ENCODE measurements at regions of chr3 and their contacts with region 1.

Region 1: DNA sequence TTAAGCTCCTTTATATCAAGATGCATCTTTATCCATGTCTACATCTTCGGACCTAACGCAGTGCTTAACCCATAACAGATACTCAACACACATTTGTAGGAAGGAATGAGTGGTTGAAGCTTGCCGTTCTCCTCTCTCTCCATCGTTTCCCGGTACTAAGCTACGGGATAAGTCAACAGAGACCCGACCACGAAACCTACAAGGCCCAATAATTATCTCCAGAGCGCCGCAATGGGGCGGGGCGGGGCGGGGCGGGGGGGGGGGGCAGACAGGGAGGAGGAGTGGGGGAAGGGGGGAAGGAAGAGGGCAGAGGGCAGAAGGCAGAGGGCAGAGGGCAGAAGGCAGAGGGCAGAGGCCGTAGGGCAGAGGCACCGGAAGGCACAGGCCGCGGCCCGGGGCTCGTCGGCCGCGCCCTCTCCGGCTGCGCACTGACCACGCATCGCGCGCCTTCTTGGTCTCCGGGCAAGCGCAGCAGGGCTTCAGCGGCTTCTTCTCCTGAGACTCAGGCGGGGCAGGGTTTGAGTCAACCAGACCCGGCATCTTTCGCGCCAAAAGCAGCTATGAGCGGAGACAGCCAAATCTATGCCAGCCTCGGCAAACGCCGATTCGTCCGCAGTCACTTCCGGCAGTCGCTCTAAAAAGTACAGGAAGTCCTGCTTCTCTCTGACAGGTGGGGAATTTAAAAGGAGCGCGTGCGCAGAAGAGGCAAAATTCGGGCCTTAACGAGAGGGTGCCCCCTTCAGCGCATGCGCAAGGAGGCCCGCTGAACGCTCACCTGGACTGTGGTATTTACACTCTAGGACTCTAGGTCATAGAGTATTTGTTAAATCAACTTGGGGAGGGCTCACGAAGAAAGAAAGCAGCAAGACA is at the start of gene COX17:
- DNase-seq: peak; percentile 99
- ATAC-seq: peak; percentile 78
- H3K4me3 ChIP-seq: peak within 1 kb of the TSS; percentile 84
- H3K27ac ChIP-seq: peak within 1 kb of the TSS; percentile 71
- H3K4me1 ChIP-seq: peaks cover 18% of the 10 kb centered on the region
- H3K27me3 ChIP-seq: no peaks in the 10 kb centered on the region
- CTCF ChIP-seq: no peak
- total RNA-seq, gene COX17: 102 and 159 TPM in 2 replicates

Region 2: GRCh38 chr3:119145500-119146191 is 531.4 kb before region 1 on chr3 and contains the start of gene TEX55:
- CTCF ChIA-PET with region 1: no interaction called
- POLR2A ChIA-PET with region 1: no interaction called
- intact Hi-C with region 1: loop called (anchors 5 kb)
- DNase-seq: peak; percentile 87
- ATAC-seq: peak; percentile 75
- H3K4me3 ChIP-seq: no peak within 1 kb of the TSS
- H3K27ac ChIP-seq: peak within 1 kb of the TSS; percentile 2; the same call in 1 of the 2 replicates
- H3K4me1 ChIP-seq: peaks cover 25% of the 10 kb centered on the region
- H3K27me3 ChIP-seq: no peaks in the 10 kb centered on the region
- CTCF ChIP-seq: peak; percentile 94
- total RNA-seq, gene TEX55: 0.33 TPM in 1 of 2 replicates, not detected in the other

Region 3: DNA sequence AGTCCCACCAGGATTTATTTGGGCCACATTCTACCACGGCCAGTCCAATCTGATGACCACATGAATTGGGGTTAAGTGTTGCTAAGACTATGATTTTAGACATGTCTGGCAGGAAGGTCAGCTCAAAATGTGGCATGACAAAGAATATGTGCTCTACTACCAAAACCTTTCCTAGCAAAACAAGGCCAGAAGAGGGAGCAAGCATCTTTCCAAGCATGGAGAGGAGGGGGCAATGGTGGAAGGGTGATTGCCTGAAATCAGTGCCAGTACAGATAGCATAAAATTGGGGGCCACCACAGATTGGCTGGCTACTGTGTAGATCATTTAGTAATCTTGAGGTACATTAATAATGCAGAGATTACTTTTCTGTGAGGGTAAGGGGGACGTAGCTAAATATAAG is 256.8 kb before region 1 on chr3:
- CTCF ChIA-PET with region 1: no interaction called
- POLR2A ChIA-PET with region 1: no interaction called
- intact Hi-C with region 1: loop called (anchors 5 kb)
- DNase-seq: peak; percentile 41
- ATAC-seq: peak; percentile 44; the same call in 1 of the 2 replicates
- H3K4me3 ChIP-seq: no peak overlapping the region
- H3K27ac ChIP-seq: no peak overlapping the region
- H3K4me1 ChIP-seq: no peaks in the 10 kb centered on the region
- H3K27me3 ChIP-seq: no peaks in the 10 kb centered on the region
- CTCF ChIP-seq: peak; percentile 57

Region 4: GRCh38 chr3:119498186-119498987 is 178.6 kb before region 1 on chr3 and contains the start of gene TIMMDC1:
- CTCF ChIA-PET with region 1: no interaction called
- POLR2A ChIA-PET with region 1: interaction called, 3 read pairs
- intact Hi-C with region 1: loop called (anchors 1 kb)
- DNase-seq: peak; percentile 99
- ATAC-seq: peak; percentile 95
- H3K4me3 ChIP-seq: peak within 1 kb of the TSS; percentile 97
- H3K27ac ChIP-seq: peak within 1 kb of the TSS; percentile 74
- H3K4me1 ChIP-seq: peaks cover 29% of the 10 kb centered on the region
- H3K27me3 ChIP-seq: no peaks in the 10 kb centered on the region
- CTCF ChIP-seq: no peak
- total RNA-seq, gene TIMMDC1: 107 and 142 TPM in 2 replicates

Region 5: DNA sequence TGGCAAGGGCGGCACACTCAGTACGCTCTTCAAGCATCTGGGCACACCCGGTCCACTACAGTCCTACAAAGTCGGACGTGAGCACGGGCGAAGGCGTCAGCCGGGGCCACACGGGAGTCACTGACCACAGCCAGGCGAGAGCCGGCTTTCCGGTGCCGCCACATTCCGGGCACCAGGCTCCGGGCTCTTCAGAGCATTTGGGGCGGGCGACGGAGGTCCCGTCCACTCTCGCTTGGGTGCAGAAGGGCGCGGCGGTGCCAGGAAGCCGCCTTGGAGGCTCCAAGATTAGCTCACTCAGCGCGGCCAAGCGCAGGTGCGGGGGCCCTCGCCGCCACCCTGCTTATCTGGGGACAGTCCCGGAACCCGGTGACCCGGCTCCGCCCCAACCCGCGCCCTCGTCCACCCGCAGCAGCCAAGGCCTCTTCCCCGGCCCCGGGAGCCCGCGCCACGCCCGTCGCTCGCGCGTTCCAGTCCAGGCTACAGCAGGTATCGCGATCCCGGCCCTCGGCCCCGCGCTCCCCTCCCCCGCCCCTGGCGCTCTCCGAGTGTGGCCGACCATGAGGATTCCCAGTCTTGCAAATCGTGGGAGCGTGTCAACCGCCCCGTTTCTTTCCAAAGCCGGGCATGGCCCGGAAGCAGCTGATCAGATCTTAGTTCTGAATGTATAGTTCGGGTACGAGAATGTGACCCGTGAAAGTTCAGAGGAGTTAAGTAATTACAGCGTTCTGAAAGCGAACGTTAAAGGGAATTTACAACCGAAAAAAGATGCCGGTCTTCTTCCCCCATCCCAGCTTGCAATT is 97.4 kb before region 1 on chr3 and contains the start of gene ADPRH:
- CTCF ChIA-PET with region 1: interaction called, 3 read pairs
- POLR2A ChIA-PET with region 1: no interaction called
- intact Hi-C with region 1: loop called (anchors 2 kb)
- DNase-seq: peak; percentile 82
- ATAC-seq: peak; percentile 92
- H3K4me3 ChIP-seq: peak within 1 kb of the TSS; percentile 70
- H3K27ac ChIP-seq: peak within 1 kb of the TSS; percentile 43
- H3K4me1 ChIP-seq: peaks cover 15% of the 10 kb centered on the region
- H3K27me3 ChIP-seq: no peaks in the 10 kb centered on the region
- CTCF ChIP-seq: no peak
- total RNA-seq, gene ADPRH: 4.7 and 5.6 TPM in 2 replicates

Region 6: GRCh38 chr3:119662604-119663373 is 14.2 kb before region 1 on chr3:
- CTCF ChIA-PET with region 1: no interaction called
- POLR2A ChIA-PET with region 1: interaction called, 5 read pairs
- intact Hi-C with region 1: loop called (anchors 1 kb)
- DNase-seq: peak; percentile 70
- ATAC-seq: peak; percentile 45
- H3K4me3 ChIP-seq: peak overlapping the region; percentile 9; the same call in 1 of the 2 replicates
- H3K27ac ChIP-seq: peak overlapping the region; percentile 91
- H3K4me1 ChIP-seq: peaks cover 52% of the 10 kb centered on the region
- H3K27me3 ChIP-seq: no peaks in the 10 kb centered on the region
- CTCF ChIP-seq: peak; percentile 30; the same call in 1 of the 2 replicates

Measured in PC-3 (cell line).